ENCODE measurements at regions of chr1 and their contacts with region 1.

Region 1: GRCh38 chr1:6235296-6235677 is 477 bp downstream of the ICMT start:
- DNase-seq: no peak
- H3K4me3 Mint-ChIP-seq: peak overlapping the region; percentile 78
- H3K27ac Mint-ChIP-seq: no peak overlapping the region
- H3K4me1 Mint-ChIP-seq: peaks cover 18% of the 10 kb centered on the region
- H3K27me3 Mint-ChIP-seq: no peaks in the 10 kb centered on the region
- CTCF ChIP-seq: no peak

Region 2: DNA sequence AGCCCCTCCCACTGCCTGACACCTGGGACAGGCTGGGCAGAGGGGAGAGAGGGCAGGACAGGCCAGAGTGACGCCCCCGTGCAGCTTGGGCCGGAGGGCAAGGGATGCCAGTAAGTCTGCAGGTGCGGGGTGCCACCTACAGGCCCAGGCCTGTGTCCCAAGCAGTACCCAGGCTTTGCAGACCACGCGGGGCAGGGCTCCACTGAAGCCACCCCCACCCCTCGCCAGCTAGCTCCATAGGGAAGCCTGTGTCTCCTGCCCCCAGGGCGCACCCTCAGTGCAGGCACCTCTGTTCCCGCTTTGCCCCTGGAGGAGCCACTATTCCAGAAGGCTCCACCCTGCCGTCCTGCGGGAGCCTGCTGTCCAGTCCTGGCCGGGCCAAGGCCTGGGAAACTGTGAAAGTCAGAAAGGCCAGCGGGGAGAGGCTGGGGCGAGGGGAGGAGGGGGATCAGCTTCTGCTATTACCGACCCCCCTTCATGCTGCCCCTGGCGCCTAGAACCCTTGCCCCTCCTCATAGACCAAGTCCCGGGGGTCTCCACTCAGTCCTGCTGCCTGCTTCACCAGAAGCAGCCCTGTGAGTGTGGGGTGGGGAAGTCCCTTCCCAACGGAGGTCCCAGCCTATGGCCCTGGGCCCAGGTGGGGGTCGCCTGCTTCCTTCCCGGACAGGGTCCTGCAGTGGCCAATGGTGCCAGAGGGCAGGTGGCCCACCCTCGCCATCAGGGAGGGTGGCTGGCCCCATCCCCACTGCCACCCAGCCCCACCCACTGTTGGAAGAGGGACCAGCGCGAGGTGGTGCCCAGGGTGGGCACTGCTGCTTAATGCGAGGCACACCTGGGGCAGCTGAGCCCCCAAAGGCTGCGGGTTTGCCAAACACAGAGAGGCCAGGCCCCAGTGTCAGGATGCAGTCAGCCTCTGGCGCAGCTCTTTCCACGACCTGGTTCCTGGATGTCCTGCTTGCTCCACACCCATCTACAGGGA is 135.2 kb before region 1 on chr1:
- CTCF ChIA-PET with region 1: no interaction called
- intact Hi-C with region 1: no loop called
- DNase-seq: peak; percentile 33
- H3K4me3 Mint-ChIP-seq: no peak overlapping the region
- H3K27ac Mint-ChIP-seq: no peak overlapping the region
- H3K4me1 Mint-ChIP-seq: no peaks in the 10 kb centered on the region
- H3K27me3 Mint-ChIP-seq: peaks cover 44% of the 10 kb centered on the region
- CTCF ChIP-seq: no peak

Region 3: GRCh38 chr1:6205849-6206519 is 29.3 kb before region 1 on chr1 and contains the start of gene RNF207:
- CTCF ChIA-PET with region 1: interaction called, 13 read pairs
- intact Hi-C with region 1: no loop called
- DNase-seq: peak; percentile 89
- H3K4me3 Mint-ChIP-seq: peak within 1 kb of the TSS; percentile 81
- H3K27ac Mint-ChIP-seq: no peak within 1 kb of the TSS
- H3K4me1 Mint-ChIP-seq: no peaks in the 10 kb centered on the region
- H3K27me3 Mint-ChIP-seq: no peaks in the 10 kb centered on the region
- CTCF ChIP-seq: no peak
- total RNA-seq, gene RNF207: 146 and 160 TPM in 2 replicates

Region 4: GRCh38 chr1:6220241-6220640 is 15.0 kb before region 1 on chr1:
- CTCF ChIA-PET with region 1: interaction called, 3 read pairs
- intact Hi-C with region 1: loop called (anchors 1 kb)
- DNase-seq: peak; percentile 78
- H3K4me3 Mint-ChIP-seq: peak overlapping the region; percentile 28
- H3K27ac Mint-ChIP-seq: peak overlapping the region; percentile 83
- H3K4me1 Mint-ChIP-seq: peaks cover 60% of the 10 kb centered on the region
- H3K27me3 Mint-ChIP-seq: no peaks in the 10 kb centered on the region
- CTCF ChIP-seq: no peak

Region 5: GRCh38 chr1:6393400-6394187 is 158.3 kb after region 1 on chr1 and contains the start of gene ACOT7:
- CTCF ChIA-PET with region 1: interaction called, 10 read pairs
- intact Hi-C with region 1: no loop called
- DNase-seq: peak; percentile 84
- H3K4me3 Mint-ChIP-seq: peak within 1 kb of the TSS; percentile 73
- H3K27ac Mint-ChIP-seq: peak within 1 kb of the TSS; percentile 74
- H3K4me1 Mint-ChIP-seq: no peaks in the 10 kb centered on the region
- H3K27me3 Mint-ChIP-seq: peaks cover 13% of the 10 kb centered on the region
- CTCF ChIP-seq: no peak
- total RNA-seq, gene ACOT7: 32.1 and 36.2 TPM in 2 replicates

Measured in Calu3 (cell line).